HepG2 (cell line): ENCODE measurements at regions of chr20 and their contacts with region 1.

Region 1: GRCh38 chr20:63627129-63627750 is 339 bp upstream of the GMEB2 start:
- DNase-seq: peak; percentile 93
- ATAC-seq: peak; percentile 62
- H3K4me3 ChIP-seq: peak overlapping the region; percentile 77 to 100 (median 98)
- H3K27ac ChIP-seq: peak overlapping the region; percentile 75
- H3K4me1 ChIP-seq: peaks cover 51% of the 10 kb centered on the region
- H3K27me3 ChIP-seq: no peaks in the 10 kb centered on the region; a peak in 1 of 5 replicates
- CTCF ChIP-seq: no peak; the same call in none of the 2 replicates
- EP300 ChIP-seq: peak in 1 of 2 experiments; percentile 51; a peak in 1 of 4 replicates
- POLR2A ChIP-seq: peak; percentile 77 to 93
- RAD21 ChIP-seq: peak; percentile 70

Region 2: GRCh38 chr20:63574156-63574828 is 52.9 kb before region 1 on chr20 and contains the start of gene HELZ2:
- CTCF ChIA-PET with region 1: no interaction called
- POLR2A ChIA-PET with region 1: interaction called, 16 read pairs
- in situ Hi-C with region 1: no loop called
- intact Hi-C with region 1: no loop called
- DNase-seq: peak; percentile 53
- ATAC-seq: peak; percentile 75
- H3K4me3 ChIP-seq: peak within 1 kb of the TSS; percentile 88 to 98 (median 94)
- H3K27ac ChIP-seq: peak within 1 kb of the TSS; percentile 23
- H3K4me1 ChIP-seq: peaks cover 61% of the 10 kb centered on the region
- H3K27me3 ChIP-seq: peaks cover 6 to 22% of the 10 kb centered on the region in 2 experiments; a peak in 3 of 5 replicates
- CTCF ChIP-seq: no peak; the same call in 1 of the 2 replicates
- EP300 ChIP-seq: no peak
- POLR2A ChIP-seq: peak in 1 of 2 experiments; percentile 85; a peak in 2 of 4 replicates
- RAD21 ChIP-seq: no peak
- total RNA-seq, gene HELZ2: 8.4 and 10.1 TPM in 2 replicates

Region 3: DNA sequence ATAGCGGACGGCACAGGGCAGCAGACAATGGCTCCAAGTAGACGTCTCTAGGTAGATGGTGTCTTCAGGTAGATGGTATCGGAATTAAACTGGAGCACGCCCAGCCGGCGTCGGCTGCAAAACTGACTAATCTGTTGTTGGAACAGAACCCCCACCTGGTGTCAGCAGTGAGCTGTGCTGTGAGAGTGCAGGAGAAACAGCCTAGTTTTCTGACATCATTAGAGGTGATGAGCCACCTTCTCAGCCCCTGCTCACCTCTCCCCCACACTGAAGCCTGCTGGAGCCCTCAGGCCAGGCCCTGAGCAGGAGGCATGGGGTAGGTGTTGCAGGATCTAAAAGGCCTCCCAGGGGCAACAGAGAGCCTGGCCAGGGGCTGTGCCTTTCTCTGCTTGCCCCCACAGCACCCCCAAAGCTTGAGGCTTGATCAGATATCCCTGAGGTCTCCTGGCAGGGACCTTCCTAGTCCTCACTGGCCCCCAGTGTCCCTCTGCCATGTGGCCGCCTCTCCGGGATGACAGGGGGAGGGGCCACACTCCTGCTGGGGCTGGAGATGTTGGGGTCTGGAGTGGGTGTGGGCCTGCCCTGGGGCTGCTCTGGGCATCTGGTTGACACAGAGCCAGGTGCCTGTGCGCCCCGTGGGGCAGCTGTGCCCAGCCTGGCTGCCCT is 46.3 kb before region 1 on chr20:
- CTCF ChIA-PET with region 1: no interaction called
- POLR2A ChIA-PET with region 1: interaction called, 9 read pairs
- in situ Hi-C with region 1: no loop called
- intact Hi-C with region 1: loop called (anchors 2 kb)
- DNase-seq: peak; percentile 78
- ATAC-seq: peak; percentile 74
- H3K4me3 ChIP-seq: no peak overlapping the region
- H3K27ac ChIP-seq: no peak overlapping the region
- H3K4me1 ChIP-seq: peaks cover 62% of the 10 kb centered on the region
- H3K27me3 ChIP-seq: peaks cover 6 to 44% of the 10 kb centered on the region in 2 experiments; a peak in 3 of 5 replicates
- CTCF ChIP-seq: peak; percentile 95
- EP300 ChIP-seq: no peak
- POLR2A ChIP-seq: no peak
- RAD21 ChIP-seq: peak; percentile 93

Region 4: DNA sequence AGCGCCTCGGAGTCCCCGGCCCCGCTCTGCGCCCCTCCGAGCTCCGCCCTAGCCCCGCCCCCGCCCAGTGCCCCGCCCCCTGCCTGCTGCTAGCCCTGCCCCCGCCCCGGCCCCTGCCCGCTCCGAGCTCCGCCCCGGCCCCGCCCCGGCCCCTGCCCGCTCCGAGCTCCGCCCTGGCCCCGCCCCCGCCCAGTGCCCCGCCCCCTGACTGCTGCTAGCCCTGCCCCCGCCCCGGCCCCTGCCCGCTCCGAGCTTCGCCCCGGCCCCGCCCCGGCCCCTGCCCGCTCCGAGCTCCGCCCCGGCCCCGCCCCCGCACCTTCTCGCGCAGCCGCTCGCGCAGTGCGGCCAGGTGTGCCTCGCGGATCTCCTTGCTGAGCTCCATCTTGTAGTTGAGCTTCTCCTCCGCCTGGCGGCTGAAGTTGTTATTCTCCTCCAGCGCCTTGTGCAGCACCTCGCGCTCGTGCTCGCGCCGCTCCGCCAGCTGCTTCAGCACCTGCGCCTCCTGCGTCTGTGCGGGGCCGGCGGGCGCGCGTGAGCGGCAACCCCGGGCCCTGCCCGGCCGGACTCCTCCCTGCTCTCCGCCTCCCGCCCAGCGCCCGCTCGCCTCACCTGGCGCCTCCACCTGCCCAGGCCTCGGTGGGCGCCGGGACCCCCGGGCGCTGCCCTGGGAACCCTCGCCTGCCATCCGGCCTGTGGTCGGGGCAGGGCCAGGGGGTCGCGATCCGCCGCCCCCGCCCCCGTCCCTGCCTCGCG is 14.7 kb after region 1 on chr20:
- CTCF ChIA-PET with region 1: no interaction called
- POLR2A ChIA-PET with region 1: interaction called, 45 read pairs
- in situ Hi-C with region 1: no loop called
- intact Hi-C with region 1: no loop called
- DNase-seq: peak; percentile 90
- ATAC-seq: peak; percentile 77
- H3K4me3 ChIP-seq: peak overlapping the region; percentile 49 to 81 (median 63)
- H3K27ac ChIP-seq: peak overlapping the region; percentile 56
- H3K4me1 ChIP-seq: peaks cover 20% of the 10 kb centered on the region
- H3K27me3 ChIP-seq: no peaks in the 10 kb centered on the region; a peak in 1 of 5 replicates
- CTCF ChIP-seq: peak; percentile 74
- EP300 ChIP-seq: no peak
- POLR2A ChIP-seq: peak; percentile 41 to 73; a peak in 3 of 4 replicates
- RAD21 ChIP-seq: peak; percentile 90

Region 5: DNA sequence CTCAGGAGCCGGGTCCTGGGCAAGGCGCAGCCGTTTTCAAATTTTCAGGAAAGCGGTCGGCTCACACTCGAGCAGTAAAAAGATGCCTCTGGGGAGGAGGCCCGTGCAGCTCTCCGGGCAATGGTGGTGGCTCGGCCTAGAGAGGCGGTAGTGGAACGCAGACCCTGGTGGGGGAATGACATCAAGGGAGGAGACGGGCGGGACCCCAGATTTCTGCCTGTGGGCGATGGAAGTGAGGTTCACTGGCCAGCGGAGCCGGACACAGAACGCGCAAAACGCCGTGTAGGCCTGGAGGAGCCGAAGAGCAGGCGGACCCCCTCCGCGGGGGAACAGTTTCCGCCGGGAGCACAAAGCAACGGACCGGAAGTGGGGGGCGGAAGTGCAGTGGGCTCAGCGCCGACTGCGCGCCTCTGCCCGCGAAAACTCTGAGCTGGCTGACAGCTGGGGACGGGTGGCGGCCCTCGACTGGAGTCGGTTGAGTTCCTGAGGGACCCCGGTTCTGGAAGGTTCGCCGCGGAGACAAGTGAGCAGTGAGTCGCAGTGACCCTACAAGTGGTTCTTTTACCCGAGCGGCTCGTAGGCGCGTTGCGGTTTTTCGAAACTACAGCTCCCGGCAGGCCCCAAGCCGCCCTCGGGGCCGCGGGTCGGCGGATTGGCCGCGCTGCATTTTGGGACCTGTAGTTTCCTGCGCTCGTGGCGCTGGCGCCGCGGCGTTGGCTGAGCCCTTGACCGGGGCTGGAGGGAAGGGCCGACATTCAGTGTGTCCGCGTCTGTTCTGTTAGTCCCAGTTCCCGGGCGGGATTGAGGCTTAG is 30.9 kb after region 1 on chr20 and contains the start of gene RTEL1:
- CTCF ChIA-PET with region 1: no interaction called
- POLR2A ChIA-PET with region 1: interaction called, 30 read pairs
- in situ Hi-C with region 1: no loop called
- intact Hi-C with region 1: loop called (anchors 1 kb)
- DNase-seq: peak; percentile 93
- ATAC-seq: peak; percentile 93
- H3K4me3 ChIP-seq: peak within 1 kb of the TSS; percentile 78 to 95 (median 94)
- H3K27ac ChIP-seq: peak within 1 kb of the TSS; percentile 65
- H3K4me1 ChIP-seq: peaks cover 40% of the 10 kb centered on the region
- H3K27me3 ChIP-seq: no peaks in the 10 kb centered on the region; a peak in 1 of 5 replicates
- CTCF ChIP-seq: no peak; the same call in 1 of the 2 replicates
- EP300 ChIP-seq: peak; percentile 24 to 66; a peak in 3 of 4 replicates
- POLR2A ChIP-seq: peak; percentile 74 to 78
- RAD21 ChIP-seq: peak; percentile 79
- total RNA-seq, gene RTEL1: 10.9 and 21.8 TPM in 2 replicates